ENCODE measurements at regions of chr12 and their contacts with region 1.

Region 1: GRCh38 chr12:113912760-113913329 is 53.3 kb downstream of the RBM19 start:
- DNase-seq: peak; percentile 34 to 78 (median 62)
- H3K4me3 ChIP-seq: no peak overlapping the region
- H3K27ac ChIP-seq: no peak overlapping the region
- H3K4me1 ChIP-seq: no peaks in the 10 kb centered on the region
- H3K27me3 ChIP-seq: no peaks in the 10 kb centered on the region
- CTCF ChIP-seq: peak; percentile 47 to 63 (median 56)
- EP300 ChIP-seq: no peak
- POLR2A ChIP-seq: no peak

Region 2: DNA sequence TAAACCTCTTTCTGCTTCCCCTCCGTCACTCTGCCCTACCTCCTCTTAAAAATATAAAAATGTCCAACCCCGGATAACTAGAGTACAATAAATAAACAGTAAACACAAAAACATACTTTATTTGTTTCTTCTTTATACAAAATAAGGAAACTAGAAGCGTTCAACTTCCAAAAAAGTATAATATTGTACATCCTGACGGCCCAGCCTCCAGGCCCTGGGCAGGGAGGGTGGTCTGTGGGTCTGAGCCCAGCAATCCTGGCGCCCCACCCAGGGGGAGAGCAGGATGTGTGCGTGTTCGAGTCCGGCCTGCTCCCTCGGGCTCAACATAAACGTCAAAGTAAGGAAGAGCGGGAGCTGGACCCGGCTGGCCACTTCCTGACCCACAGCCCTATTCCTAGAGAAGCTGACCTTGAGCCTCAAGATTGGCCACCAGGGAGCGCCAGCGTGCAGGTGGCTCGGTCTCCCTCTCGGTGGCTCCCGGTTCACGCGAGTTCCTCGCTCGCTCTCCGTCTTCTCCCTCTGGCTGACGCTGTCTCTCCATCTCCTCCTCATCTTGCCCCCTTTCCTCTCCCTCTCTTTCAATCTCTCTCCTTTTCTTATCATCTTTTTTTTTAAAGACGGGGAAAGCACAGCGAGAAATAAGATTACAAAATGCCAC is 450.6 kb before region 1 on chr12:
- intact Hi-C with region 1: loop called in 2 of 4 experiments (anchors 10 kb)
- DNase-seq: peak; percentile 59 to 85 (median 71)
- H3K4me3 ChIP-seq: no peak overlapping the region
- H3K27ac ChIP-seq: no peak overlapping the region
- H3K4me1 ChIP-seq: peaks cover 13% of the 10 kb centered on the region
- H3K27me3 ChIP-seq: peaks cover 5% of the 10 kb centered on the region
- CTCF ChIP-seq: peak in 1 of 3 donors; percentile 53
- EP300 ChIP-seq: no peak
- POLR2A ChIP-seq: no peak

Region 3: DNA sequence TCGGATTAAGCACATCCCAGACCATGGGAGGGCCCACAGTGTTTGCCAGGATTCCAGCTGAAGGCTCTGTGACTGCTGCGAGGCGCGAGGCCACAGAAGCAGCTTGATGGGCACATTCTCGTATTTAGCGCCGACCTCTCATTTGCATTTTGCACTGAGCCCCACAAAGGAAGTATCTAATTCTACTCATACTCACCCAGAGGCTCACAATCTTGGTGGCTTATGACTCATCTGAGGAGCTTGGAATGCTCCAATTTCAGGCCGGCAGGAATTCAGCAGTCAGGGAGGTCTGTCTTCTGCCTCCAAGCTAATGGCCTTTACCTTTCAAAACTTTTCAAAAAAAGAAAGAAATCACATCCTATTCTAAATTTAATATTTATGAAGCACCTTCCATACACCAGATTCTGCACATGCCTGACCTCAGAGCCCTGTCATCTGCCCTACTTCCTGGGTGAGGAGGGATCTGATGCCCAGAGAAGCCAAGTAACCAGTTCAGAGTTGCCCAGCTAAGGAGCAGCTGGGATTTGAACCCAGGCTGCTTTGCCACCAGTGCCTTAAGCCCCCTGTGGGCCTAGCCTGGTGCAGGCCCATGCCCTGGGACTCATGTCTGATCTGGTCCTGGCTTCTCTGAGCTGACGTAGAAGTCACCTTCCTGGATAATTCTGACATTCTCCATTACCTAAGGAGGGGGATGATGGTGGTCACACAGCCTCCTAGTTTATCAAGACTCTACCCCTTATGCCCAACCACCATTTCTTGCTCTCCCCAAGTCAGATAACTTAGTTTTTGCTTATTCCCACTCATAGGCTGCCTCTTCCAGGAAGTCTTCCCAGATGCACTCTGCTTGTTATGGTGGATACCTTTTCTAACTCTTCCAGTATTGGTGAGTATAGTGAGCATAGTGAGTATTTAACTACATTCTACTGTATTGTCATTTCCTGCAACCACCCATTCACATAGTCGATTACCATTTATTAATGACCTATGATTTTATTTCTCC is 145.7 kb before region 1 on chr12:
- intact Hi-C with region 1: no loop called
- DNase-seq: no peak
- H3K4me3 ChIP-seq: no peak overlapping the region
- H3K27ac ChIP-seq: no peak overlapping the region
- H3K4me1 ChIP-seq: no peaks in the 10 kb centered on the region
- H3K27me3 ChIP-seq: no peaks in the 10 kb centered on the region
- CTCF ChIP-seq: no peak
- EP300 ChIP-seq: no peak
- POLR2A ChIP-seq: no peak

Region 4: DNA sequence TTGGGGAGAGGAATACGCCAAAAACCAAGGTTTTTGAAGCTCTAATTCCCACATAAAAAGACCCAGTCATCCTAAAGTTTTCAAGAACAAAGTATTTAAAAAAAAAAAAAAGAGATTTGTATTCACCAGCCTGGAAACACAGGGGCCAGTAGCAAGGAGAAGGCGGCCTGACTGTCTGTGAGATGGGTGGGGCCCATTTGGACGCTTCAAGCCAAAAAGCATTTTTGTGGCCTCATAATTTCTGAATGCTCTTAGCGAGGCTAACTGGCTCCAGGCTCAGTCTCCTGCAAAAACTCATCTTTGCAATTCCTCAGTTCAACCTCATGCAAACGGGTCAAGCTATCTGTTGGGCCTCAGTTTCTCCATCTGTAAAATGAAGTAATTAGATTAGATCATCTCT is 1850.5 kb after region 1 on chr12:
- intact Hi-C with region 1: no loop called
- DNase-seq: no peak
- H3K4me3 ChIP-seq: no peak overlapping the region
- H3K27ac ChIP-seq: no peak overlapping the region
- H3K4me1 ChIP-seq: no peaks in the 10 kb centered on the region
- H3K27me3 ChIP-seq: no peaks in the 10 kb centered on the region
- CTCF ChIP-seq: no peak
- EP300 ChIP-seq: no peak
- POLR2A ChIP-seq: no peak